Activated CD8-positive, alpha-beta T cell treated with anti-CD3 and anti-CD28 coated beads, Interleukin-2, amount 10 ng/mL, durations not matched to agents 7 days and 5 days (primary cell): ENCODE measurements at regions of chr11 and their contacts with region 1.

Region 1: GRCh38 chr11:67409261-67409666 is 5.4 kb downstream of the TBC1D10C start:
- DNase-seq: peak; percentile 93
- ATAC-seq: peak; percentile 72
- H3K4me3 Mint-ChIP-seq: peak overlapping the region; percentile 92
- H3K27ac Mint-ChIP-seq: peak overlapping the region; percentile 98
- H3K4me1 Mint-ChIP-seq: peaks cover 80% of the 10 kb centered on the region
- H3K27me3 Mint-ChIP-seq: peaks cover 2% of the 10 kb centered on the region

Region 2: DNA sequence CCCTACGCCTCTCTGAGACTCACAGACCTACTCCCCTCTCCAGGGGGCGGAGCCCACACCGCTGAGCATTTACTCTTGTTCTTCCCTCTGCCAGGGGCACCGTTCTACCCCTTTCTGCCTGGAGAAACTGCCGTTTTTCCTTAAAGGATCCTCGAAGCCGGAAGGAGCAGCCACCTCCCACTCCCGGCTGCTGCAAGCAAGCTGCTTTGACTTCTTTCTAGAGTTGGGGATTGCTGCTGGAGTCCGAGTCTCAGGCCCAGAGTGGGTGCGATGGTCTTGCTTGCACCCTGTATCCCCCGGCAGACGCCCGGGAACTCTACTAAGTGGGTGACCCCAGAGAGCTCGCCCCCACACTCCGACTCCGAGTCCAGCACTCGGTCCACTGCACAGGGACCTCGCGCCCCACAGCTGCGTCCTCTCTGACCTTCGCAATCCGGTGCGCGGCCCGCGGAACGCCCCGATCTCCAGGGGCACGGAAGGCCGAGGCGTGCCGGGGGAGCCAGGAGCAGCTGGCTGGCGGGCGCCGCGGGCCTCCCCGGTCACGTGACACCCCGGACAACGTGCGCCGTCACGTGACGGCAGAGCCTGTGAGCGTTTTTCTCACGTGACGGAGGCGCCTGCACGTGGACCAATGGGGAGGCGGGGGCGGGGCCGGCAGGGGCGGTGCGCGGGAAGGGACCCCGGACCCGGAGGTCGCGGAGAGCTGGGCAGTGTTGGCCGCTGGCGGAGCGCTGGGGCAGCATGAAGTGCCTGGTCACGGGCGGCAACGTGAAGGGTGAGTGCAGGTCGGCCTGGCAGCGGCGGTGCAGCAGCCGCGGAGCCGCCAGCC is 17.7 kb before region 1 on chr11 and contains the start of gene RAD9A:
- CTCF ChIA-PET with region 1: interaction called, 6 read pairs
- POLR2A ChIA-PET with region 1: interaction called, 13 read pairs
- DNase-seq: peak; percentile 96
- ATAC-seq: peak; percentile 82
- H3K4me3 Mint-ChIP-seq: peak within 1 kb of the TSS; percentile 97
- H3K27ac Mint-ChIP-seq: peak within 1 kb of the TSS; percentile 83
- H3K4me1 Mint-ChIP-seq: peaks cover 51% of the 10 kb centered on the region
- H3K27me3 Mint-ChIP-seq: no peaks in the 10 kb centered on the region
- total RNA-seq, gene RAD9A: 59.5 to 60.4 TPM

Region 3: DNA sequence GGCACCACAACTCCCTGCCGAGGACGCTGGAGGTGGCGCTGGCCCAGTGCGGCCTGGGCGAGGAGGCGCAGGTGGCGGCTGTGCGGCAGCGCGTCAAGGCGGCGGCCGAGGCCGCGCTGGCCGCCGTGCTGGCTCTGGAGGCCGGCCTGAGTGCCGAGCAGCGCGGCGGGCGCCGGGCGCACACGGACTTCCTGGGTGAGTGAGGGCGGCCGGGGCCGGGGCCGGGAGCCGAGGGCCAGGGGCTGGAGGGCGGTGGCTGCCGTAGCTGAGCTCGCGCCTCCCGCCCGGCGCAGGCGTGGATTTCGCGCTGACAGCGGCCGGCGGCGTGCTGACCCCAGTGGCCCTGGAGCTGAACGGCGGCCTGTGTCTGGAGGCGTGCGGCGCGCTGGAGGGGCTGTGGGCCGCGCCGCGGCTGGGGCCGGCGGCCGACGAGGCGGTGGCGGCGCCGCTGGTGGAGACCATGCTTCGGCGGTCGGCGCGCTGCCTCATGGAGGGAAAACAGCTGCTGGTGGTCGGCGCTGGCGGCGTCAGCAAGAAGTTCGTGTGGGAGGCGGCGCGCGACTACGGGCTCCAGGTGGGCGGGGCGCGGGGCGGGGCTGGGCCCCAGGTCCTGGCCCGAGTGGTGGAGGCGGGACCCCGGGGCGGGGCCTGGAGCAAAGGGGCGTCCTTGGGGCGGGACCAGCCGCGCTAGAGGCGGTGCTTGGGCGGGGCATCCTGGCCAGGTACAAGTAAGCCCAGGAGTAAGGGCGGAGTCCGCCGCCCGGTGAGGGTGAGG is 11.6 kb after region 1 on chr11:
- CTCF ChIA-PET with region 1: interaction called, 73 read pairs
- POLR2A ChIA-PET with region 1: interaction called, 95 read pairs
- DNase-seq: peak; percentile 99
- ATAC-seq: peak; percentile 86
- H3K4me3 Mint-ChIP-seq: peak overlapping the region; percentile 79
- H3K27ac Mint-ChIP-seq: peak overlapping the region; percentile 86
- H3K4me1 Mint-ChIP-seq: peaks cover 70% of the 10 kb centered on the region
- H3K27me3 Mint-ChIP-seq: no peaks in the 10 kb centered on the region